ENCODE measurements at regions of chr1 and their contacts with region 1.

Region 1: DNA sequence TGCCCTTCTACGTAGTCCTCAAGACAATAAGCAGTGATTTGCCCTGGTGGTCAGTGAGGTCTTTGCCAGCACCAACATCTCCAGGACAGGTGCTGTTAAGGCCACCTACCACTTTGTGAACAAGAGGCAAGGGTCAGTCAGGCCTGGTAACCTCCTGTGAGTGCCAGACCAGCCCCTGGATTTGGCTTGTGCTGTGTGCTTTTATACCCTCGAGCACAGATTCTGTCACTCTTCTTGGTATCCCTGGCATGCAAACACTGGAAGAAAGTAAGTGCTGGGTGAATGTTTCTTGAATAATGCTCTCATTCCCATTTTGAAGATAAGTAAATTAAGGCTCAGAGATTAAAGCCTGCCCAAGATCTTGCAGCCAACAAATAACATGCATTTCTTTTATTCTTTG is 10.5 kb upstream of the CEP85 start:
- DNase-seq: no peak
- ATAC-seq: no peak
- H3K4me3 ChIP-seq: no peak overlapping the region
- H3K27ac ChIP-seq: no peak overlapping the region
- H3K4me1 ChIP-seq: no peaks in the 10 kb centered on the region
- H3K27me3 ChIP-seq: no peaks in the 10 kb centered on the region
- CTCF ChIP-seq: no peak

Region 2: GRCh38 chr1:26145041-26145959 is 78.2 kb before region 1 on chr1:
- intact Hi-C with region 1: no loop called
- DNase-seq: peak; percentile 76 to 86
- ATAC-seq: peak; percentile 93 to 98 (median 96)
- H3K4me3 ChIP-seq: no peak overlapping the region
- H3K27ac ChIP-seq: no peak overlapping the region
- H3K4me1 ChIP-seq: no peaks in the 10 kb centered on the region
- H3K27me3 ChIP-seq: no peaks in the 10 kb centered on the region
- CTCF ChIP-seq: peak; percentile 85

Region 3: GRCh38 chr1:26175346-26175745 is 48.1 kb before region 1 on chr1:
- intact Hi-C with region 1: loop called in 1 of 2 experiments (anchors 2 kb)
- DNase-seq: no peak
- ATAC-seq: no peak
- H3K4me3 ChIP-seq: no peak overlapping the region
- H3K27ac ChIP-seq: no peak overlapping the region
- H3K4me1 ChIP-seq: peaks cover 17% of the 10 kb centered on the region
- H3K27me3 ChIP-seq: no peaks in the 10 kb centered on the region
- CTCF ChIP-seq: no peak

Region 4: GRCh38 chr1:26345718-26346549 is 122.4 kb after region 1 on chr1:
- intact Hi-C with region 1: no loop called
- DNase-seq: no peak
- ATAC-seq: no peak
- H3K4me3 ChIP-seq: no peak overlapping the region
- H3K27ac ChIP-seq: no peak overlapping the region
- H3K4me1 ChIP-seq: no peaks in the 10 kb centered on the region
- H3K27me3 ChIP-seq: peaks cover 0 to 9% (median 0%) of the 10 kb centered on the region in 3 donors
- CTCF ChIP-seq: no peak